ENCODE measurements at regions of chr7 and their contacts with region 1.

Region 1: GRCh38 chr7:151427700-151428377 is 12.1 kb downstream of the CRYGN start:
- DNase-seq: no peak
- ATAC-seq: no peak
- H3K4me3 ChIP-seq: no peak overlapping the region
- H3K27ac ChIP-seq: no peak overlapping the region
- H3K4me1 ChIP-seq: peaks cover 10% of the 10 kb centered on the region
- H3K27me3 ChIP-seq: no peaks in the 10 kb centered on the region
- CTCF ChIP-seq: no peak

Region 2: DNA sequence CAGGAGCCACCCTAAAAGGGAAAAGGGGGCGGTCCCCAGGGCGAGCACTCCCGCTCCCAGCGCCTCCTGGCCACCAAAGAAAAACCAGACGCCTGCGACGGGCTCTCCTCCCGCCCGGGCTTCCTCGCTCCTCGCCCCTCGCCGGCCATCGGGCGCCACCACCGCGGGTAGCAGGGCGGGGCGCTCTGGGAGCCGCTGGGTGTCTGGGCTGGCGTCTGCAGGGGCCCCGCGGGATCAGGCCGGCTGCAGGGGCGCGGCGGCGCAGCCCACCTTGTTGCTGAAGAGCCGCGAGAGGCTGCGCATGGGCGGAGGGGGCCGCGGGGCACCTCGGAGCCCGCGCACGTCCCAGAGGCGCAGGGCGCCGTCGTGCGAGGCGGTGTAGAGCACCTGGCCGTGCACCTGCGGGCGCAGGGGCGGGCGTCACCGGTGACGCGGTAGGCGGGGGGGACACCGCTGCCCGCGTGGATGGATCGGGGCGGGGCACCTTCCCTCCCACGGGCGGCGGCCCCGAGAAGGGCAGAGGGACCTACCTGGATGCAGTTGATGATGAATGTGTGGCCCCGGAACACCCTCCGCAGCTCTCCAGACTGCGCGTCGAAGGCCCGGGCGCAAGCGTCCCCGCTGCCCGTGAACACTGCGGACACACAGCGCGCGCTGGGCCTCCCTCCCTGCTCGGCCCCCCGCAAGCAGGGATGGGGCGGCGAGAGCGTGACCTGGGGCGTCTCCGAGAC is 46.3 kb before region 1 on chr7:
- CTCF ChIA-PET with region 1: no interaction called
- POLR2A ChIA-PET with region 1: no interaction called
- intact Hi-C with region 1: no loop called
- DNase-seq: no peak
- ATAC-seq: no peak
- H3K4me3 ChIP-seq: no peak overlapping the region
- H3K27ac ChIP-seq: no peak overlapping the region
- H3K4me1 ChIP-seq: no peaks in the 10 kb centered on the region
- H3K27me3 ChIP-seq: no peaks in the 10 kb centered on the region
- CTCF ChIP-seq: no peak

Region 3: GRCh38 chr7:151489508-151489907 is 61.7 kb after region 1 on chr7:
- CTCF ChIA-PET with region 1: no interaction called
- POLR2A ChIA-PET with region 1: interaction called, 11 read pairs
- intact Hi-C with region 1: no loop called
- DNase-seq: no peak
- ATAC-seq: no peak
- H3K4me3 ChIP-seq: no peak overlapping the region
- H3K27ac ChIP-seq: no peak overlapping the region
- H3K4me1 ChIP-seq: peaks cover 46% of the 10 kb centered on the region
- H3K27me3 ChIP-seq: no peaks in the 10 kb centered on the region
- CTCF ChIP-seq: no peak

Measured in PC-3 (cell line).